ENCODE measurements at regions of chr1 and their contacts with region 1.

Region 1: GRCh38 chr1:26602378-26602959 is 72.9 kb downstream of the RPS6KA1 start:
- DNase-seq: peak; percentile 65
- CTCF ChIP-seq: peak; percentile 74

Region 2: DNA sequence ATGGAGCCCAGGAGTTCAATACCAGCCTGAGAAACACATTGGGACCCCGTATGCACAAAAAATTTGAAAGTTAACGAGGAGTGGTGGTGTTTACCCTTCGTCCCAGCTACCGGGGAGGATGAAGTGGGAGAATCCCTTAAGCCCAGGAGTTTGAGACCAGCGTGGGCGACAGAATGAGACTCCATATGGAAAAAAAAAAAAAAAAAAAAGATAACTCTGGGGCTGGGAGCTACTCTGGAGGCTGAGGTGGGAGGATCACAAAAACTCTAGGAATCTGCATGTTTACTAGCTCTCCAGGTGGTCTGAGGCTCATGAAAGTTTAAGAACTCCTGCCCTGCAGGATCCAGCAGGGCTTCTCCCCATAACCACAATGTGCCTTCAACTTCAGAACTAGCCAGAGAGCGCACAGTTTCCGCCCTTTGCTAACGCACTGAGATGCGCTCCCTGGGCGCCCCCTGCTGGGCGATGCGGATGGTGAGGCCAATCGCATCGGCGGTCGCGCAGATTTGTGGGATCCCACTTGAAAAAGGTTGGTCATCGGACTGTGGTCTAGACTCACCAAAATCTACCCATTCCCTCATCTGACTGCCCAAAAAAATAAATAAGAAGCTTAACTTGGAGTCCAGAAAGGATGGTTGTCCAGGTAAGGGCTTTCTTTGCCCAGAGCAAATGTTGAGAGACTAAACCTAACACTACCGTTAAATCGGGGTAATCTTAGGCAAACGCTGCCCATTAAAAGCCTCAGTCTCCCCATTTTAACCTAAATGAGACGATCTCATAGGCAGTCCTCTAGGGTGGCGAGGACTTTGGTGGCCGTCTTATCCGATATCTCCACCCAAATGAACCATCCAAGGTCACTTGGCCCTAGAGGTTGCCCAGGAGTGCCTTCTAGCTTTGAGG is 238.7 kb before region 1 on chr1:
- CTCF ChIA-PET with region 1: no interaction called
- POLR2A ChIA-PET with region 1: no interaction called
- DNase-seq: peak; percentile 87
- CTCF ChIP-seq: peak; percentile 97

Region 3: GRCh38 chr1:26417111-26417759 is 185.2 kb before region 1 on chr1:
- CTCF ChIA-PET with region 1: no interaction called
- POLR2A ChIA-PET with region 1: no interaction called
- DNase-seq: peak; percentile 85
- CTCF ChIP-seq: peak; percentile 99

Region 4: GRCh38 chr1:26582836-26583460 is 19.5 kb before region 1 on chr1:
- CTCF ChIA-PET with region 1: interaction called, 25 read pairs
- POLR2A ChIA-PET with region 1: no interaction called
- DNase-seq: peak; percentile 68
- CTCF ChIP-seq: no peak

Region 5: DNA sequence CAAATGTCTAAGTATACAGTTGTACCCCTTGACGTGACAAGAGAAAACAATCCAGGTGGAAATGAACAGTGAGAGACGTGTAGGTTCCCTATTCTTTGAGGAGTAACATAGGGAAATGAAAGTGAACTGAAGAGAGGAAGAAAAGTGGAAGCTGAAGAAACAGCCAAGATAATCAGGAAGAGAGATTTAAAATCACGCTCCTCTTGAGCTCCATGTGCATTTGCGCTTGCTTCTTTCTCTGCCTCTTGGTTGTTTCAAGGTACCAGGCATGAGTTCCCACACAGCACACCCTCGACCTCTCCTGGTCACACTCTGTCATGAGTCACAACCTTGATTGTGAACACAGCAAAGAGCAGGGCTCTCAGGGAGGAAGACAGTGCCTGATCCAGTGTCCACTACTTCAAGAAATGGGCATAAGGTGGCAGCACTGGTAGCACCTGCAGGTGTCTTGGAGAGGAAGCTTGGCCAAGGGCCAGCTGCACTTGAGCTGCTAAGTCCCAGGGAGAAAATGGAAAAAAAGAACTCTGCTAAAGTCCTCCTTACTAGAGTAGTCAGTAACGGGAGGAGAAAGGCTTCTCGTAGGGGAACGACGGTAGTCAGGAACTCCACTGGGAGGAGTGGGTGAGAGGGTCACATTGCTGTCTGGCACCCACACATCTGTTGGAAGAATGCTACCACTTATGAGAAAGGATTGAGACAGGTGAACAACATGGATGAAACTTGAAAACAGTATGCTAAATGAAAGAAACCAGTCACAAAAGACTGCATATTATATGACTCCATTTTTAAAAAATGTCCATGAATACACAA is 75.0 kb after region 1 on chr1:
- CTCF ChIA-PET with region 1: interaction called, 11 read pairs
- POLR2A ChIA-PET with region 1: no interaction called
- DNase-seq: peak; percentile 74
- CTCF ChIP-seq: peak; percentile 57

Region 6: DNA sequence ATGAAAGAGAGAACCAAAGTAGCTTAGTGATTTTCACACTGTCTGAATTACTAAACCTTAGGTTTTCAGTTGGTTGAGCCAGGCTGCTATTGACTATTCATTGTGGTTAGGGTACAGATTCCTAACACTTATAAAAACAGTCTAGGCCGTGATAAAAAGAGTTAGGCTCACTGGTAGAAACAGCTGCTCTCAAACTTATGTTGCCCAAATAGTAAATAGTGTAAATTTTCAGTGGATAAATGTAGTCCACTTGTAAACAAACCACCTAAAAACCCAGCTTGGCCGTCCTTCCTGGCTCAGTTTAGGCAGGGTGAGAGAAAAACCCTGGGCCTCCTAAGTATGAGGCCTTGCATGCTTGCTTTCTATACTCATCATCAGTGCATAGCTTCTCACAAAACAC is 128.2 kb after region 1 on chr1:
- CTCF ChIA-PET with region 1: interaction called, 17 read pairs
- POLR2A ChIA-PET with region 1: no interaction called
- DNase-seq: no peak
- CTCF ChIP-seq: no peak

Region 7: DNA sequence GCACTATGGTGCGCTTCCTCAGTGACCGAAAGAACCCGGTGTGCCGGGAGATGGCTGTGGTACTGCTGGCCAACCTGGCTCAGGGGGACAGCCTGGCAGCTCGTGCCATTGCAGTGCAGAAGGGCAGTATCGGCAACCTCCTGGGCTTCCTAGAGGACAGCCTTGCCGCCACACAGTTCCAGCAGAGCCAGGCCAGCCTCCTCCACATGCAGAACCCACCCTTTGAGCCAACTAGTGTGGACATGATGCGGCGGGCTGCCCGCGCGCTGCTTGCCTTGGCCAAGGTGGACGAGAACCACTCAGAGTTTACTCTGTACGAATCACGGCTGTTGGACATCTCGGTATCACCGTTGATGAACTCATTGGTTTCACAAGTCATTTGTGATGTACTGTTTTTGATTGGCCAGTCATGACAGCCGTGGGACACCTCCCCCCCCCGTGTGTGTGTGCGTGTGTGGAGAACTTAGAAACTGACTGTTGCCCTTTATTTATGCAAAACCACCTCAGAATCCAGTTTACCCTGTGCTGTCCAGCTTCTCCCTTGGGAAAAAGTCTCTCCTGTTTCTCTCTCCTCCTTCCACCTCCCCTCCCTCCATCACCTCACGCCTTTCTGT is 178.0 kb after region 1 on chr1:
- CTCF ChIA-PET with region 1: interaction called, 257 read pairs
- POLR2A ChIA-PET with region 1: no interaction called
- DNase-seq: no peak
- CTCF ChIP-seq: no peak

Region 8: GRCh38 chr1:26799479-26800142 is 197.1 kb after region 1 on chr1:
- CTCF ChIA-PET with region 1: interaction called, 21 read pairs
- POLR2A ChIA-PET with region 1: no interaction called
- DNase-seq: no peak
- CTCF ChIP-seq: no peak

Region 9: DNA sequence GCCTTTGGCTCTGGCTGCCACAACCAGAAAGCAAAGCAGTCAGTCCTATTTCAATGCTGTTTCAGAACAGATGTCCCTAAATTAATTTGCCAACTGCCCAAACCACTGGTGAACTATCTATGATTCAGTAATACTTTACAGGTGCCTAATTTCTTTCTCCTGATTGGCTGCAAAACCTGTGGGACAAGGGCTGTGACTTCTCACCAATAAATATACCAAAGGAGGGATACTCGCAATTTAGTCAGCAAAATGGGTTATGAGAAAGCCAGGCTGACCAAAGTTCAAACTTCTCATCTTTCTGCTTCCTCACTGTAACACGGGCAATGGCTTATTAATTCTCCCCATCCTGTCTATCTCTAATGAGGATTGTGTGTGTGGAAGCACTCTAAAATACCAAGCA is 274.9 kb after region 1 on chr1:
- CTCF ChIA-PET with region 1: interaction called, 14 read pairs
- POLR2A ChIA-PET with region 1: no interaction called
- DNase-seq: no peak
- CTCF ChIP-seq: no peak